Activated CD4-positive, alpha-beta memory T cell treated with anti-CD3 and anti-CD28 coated beads, Interleukin-2, amount 10 ng/mL, durations not matched to agents 7 days and 5 days (primary cell): ENCODE measurements at regions of chr1 and their contacts with region 1.

Region 1: DNA sequence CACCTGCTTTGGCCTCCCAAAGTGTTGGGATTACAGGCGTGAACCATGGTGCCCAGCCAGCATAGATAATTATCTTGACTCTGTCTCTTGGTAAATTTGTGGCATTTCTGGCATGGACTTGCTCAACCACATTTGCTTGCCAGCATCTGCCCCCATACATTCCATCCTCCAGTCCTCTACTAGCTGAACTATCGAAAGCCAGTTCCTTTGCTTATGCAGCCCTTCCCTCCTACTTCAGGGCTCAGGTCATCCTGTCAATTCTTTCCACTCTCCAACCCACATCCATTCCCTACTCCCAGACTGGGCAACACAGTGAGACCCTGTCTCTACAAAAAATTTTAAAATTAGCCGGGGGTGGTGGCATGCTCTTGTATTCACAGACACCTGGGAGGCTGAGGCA is 13.0 kb upstream of the UQCRHL start:
- DNase-seq: no peak
- H3K4me3 Mint-ChIP-seq: no peak overlapping the region
- H3K27ac Mint-ChIP-seq: no peak overlapping the region
- H3K4me1 Mint-ChIP-seq: peaks cover 28% of the 10 kb centered on the region
- H3K27me3 Mint-ChIP-seq: no peaks in the 10 kb centered on the region

Region 2: GRCh38 chr1:15803354-15803753 is 17.1 kb before region 1 on chr1:
- CTCF ChIA-PET with region 1: interaction called, 18 read pairs
- POLR2A ChIA-PET with region 1: no interaction called
- DNase-seq: peak; percentile 26
- H3K4me3 Mint-ChIP-seq: no peak overlapping the region
- H3K27ac Mint-ChIP-seq: no peak overlapping the region
- H3K4me1 Mint-ChIP-seq: no peaks in the 10 kb centered on the region
- H3K27me3 Mint-ChIP-seq: peaks cover 8% of the 10 kb centered on the region

Region 3: GRCh38 chr1:15835741-15836510 is 15.4 kb after region 1 on chr1:
- CTCF ChIA-PET with region 1: interaction called, 30 read pairs
- POLR2A ChIA-PET with region 1: interaction called, 28 read pairs
- DNase-seq: peak; percentile 99
- H3K4me3 Mint-ChIP-seq: peak overlapping the region; percentile 86
- H3K27ac Mint-ChIP-seq: peak overlapping the region; percentile 94
- H3K4me1 Mint-ChIP-seq: peaks cover 31% of the 10 kb centered on the region
- H3K27me3 Mint-ChIP-seq: no peaks in the 10 kb centered on the region

Region 4: DNA sequence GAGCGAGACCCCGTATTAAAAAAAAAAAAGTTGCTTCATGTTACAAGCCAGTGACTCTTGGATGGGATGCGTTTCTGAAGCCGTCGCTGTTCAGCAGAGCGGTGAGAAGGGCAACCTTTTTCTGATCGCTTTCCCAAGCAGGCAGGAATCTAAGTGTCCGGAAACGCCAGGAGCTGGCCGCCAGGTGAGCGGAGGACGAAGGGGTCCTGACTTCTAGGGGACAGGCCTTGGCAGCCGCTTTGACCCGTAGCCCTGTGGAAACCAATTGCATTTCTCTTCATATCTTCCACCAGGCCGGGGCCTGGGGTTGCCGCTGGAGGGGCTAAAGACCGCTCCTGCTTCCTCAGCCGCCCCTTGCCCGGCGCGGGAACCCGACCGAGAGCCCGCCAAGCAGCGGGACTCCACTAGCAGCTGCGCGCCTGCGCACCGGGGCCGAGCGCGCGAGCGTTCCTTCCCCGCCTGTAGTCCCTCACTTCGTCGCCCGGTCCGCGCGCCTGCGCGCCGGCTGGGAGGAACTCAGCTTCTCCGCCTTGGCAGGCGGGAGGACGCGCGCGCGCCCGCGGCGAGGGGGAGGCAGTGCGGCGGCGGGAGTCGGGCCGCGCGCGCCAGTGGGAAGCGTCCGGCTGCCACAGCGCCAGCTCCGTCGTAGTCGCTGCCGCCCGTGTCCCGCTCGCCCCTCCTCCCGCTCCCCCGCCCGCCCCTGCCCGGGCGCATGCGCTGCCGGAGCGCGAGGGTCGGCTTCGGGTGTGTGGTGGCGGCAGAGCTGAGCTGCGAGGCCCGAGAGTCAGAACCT is 26.8 kb after region 1 on chr1 and contains the start of gene SPEN:
- CTCF ChIA-PET with region 1: interaction called, 25 read pairs
- POLR2A ChIA-PET with region 1: interaction called, 11 read pairs
- DNase-seq: peak; percentile 98
- H3K4me3 Mint-ChIP-seq: peak within 1 kb of the TSS; percentile 90
- H3K27ac Mint-ChIP-seq: peak within 1 kb of the TSS; percentile 95
- H3K4me1 Mint-ChIP-seq: peaks cover 52% of the 10 kb centered on the region
- H3K27me3 Mint-ChIP-seq: no peaks in the 10 kb centered on the region
- total RNA-seq, gene SPEN: 52.1 to 52.5 TPM

Region 5: GRCh38 chr1:15916417-15916816 is 95.9 kb after region 1 on chr1:
- CTCF ChIA-PET with region 1: interaction called, 11 read pairs
- POLR2A ChIA-PET with region 1: interaction called, 6 read pairs
- DNase-seq: no peak
- H3K4me3 Mint-ChIP-seq: no peak overlapping the region
- H3K27ac Mint-ChIP-seq: peak overlapping the region; percentile 58
- H3K4me1 Mint-ChIP-seq: peaks cover 40% of the 10 kb centered on the region
- H3K27me3 Mint-ChIP-seq: no peaks in the 10 kb centered on the region

Region 6: DNA sequence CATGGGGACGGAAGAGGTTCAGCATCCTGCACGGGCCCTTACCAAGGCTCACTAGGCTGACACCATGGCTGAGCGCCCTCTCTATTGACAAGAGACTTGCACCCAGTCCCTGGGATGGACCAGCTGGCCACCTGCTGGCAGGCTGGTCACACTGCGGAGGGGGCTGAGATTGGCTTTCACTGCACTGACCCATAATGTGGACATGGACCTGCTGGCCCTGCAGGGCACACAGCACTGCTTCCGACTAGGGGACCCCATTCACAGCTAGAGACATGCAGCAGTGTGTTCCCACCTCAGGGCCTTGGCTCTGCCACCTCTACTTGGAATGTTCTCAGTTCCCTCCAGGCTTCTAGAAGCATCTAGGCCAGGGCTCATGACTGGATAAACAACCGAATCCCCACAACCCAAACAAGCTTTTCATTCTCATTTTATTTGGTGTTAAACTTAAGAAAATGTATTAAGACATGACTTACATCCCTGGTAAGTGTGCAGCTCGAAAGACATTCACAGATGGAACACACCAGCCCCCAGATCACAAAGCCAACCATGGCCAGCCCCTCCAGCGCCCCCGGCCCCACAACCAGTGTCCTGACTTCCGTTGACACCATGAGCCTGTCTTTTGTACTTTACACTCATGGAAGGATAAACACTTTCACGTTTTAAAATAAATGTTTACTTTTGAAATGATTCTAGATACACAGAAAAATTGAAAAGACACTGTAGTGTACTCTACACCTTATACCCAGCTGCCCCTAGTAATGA is 174.3 kb after region 1 on chr1:
- CTCF ChIA-PET with region 1: interaction called, 14 read pairs
- POLR2A ChIA-PET with region 1: no interaction called
- DNase-seq: peak; percentile 58
- H3K4me3 Mint-ChIP-seq: no peak overlapping the region
- H3K27ac Mint-ChIP-seq: no peak overlapping the region
- H3K4me1 Mint-ChIP-seq: no peaks in the 10 kb centered on the region
- H3K27me3 Mint-ChIP-seq: peaks cover 9% of the 10 kb centered on the region